H1 (cell line): ENCODE measurements at regions of chr7 and their contacts with region 1.

Region 1: GRCh38 chr7:88758381-88759229 is 895 bp upstream of the ZNF804B start:
- DNase-seq: peak; percentile 9 to 50
- H3K4me3 ChIP-seq: peak overlapping the region; percentile 36 to 63 (median 48)
- H3K27ac ChIP-seq: no peak overlapping the region
- H3K4me1 ChIP-seq: peaks cover 0 to 5% (median under 1%) of the 10 kb centered on the region in 4 experiments; a peak in 1 of 7 replicates
- H3K27me3 ChIP-seq: peaks cover 6 to 31% (median 17%) of the 10 kb centered on the region in 4 experiments
- CTCF ChIP-seq: peak in 1 of 3 experiments; percentile 12; a peak in 1 of 4 replicates
- EP300 ChIP-seq: no peak
- POLR2A ChIP-seq: no peak
- RAD21 ChIP-seq: peak; percentile 15 to 20; a peak in 2 of 4 replicates

Region 2: DNA sequence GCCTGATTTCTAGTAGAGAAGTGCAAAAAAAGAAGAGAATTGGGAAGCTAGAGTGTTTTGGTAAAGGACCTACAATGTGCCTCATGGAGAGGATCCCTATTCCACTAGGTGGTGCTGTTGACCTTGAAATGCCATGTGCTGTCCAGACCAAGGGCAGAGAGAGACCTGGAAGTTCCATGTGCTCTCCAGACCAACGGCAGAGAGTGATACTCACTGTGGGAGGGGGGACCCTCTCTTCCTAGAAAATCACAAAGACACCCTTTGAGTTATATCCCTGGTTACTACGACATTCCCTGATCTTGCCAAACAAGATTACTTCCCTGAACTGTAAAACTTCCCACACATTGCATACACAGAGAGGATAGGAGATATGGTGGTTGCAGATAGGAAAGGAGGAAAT is 211.8 kb before region 1 on chr7:
- CTCF ChIA-PET with region 1: interaction called, 10 read pairs
- POLR2A ChIA-PET with region 1: no interaction called
- DNase-seq: peak; percentile 17 to 60
- H3K4me3 ChIP-seq: no peak overlapping the region
- H3K27ac ChIP-seq: no peak overlapping the region
- H3K4me1 ChIP-seq: no peaks in the 10 kb centered on the region
- H3K27me3 ChIP-seq: no peaks in the 10 kb centered on the region
- CTCF ChIP-seq: peak; percentile 29 to 83 (median 57)
- EP300 ChIP-seq: no peak
- POLR2A ChIP-seq: no peak
- RAD21 ChIP-seq: peak; percentile 91 to 94